ENCODE measurements at regions of chr5 and their contacts with region 1.

Region 1: GRCh38 chr5:157328277-157328912 is 62.5 kb downstream of the CYFIP2 start:
- DNase-seq: peak in 1 of 2 donors; percentile 69
- ATAC-seq: peak; percentile 95
- H3K4me3 ChIP-seq: no peak overlapping the region
- H3K27ac ChIP-seq: no peak overlapping the region
- H3K4me1 ChIP-seq: no peaks in the 10 kb centered on the region
- H3K27me3 ChIP-seq: no peaks in the 10 kb centered on the region

Region 2: DNA sequence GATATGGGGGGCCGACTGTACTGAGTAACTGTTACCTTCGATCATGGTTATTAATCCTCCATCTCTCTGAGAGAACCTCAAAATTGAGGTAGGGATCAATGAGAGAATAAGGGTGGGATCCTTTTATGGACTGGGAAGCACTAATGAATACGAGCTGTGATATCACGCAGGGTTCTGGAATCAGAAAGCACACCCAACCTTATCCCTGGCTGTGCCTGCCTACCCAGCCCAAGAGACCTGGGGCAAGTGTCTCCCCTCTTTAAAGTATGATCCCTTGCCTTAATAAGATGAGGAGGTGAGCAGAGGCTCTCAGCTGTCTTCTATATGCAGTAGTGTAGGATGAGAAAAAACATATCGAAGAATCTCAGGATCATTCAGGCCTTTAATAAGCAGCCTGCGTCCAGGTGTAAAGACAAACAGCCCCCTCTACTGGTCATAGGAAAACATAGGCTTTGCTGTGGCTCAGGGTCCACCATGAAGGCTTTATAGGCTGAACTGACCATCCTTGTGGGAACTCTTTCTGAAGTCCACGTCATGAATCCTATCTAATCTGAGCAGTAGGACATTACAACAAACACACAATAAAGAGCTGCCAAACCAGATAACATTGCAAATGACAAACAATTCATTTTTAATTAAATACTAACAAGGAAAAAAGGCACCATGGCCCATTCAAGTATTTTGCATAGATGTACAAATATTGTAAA is 148.5 kb after region 1 on chr5:
- intact Hi-C with region 1: loop called (anchors 2 to 5 kb)
- DNase-seq: peak in 1 of 2 donors; percentile 4
- ATAC-seq: peak; percentile 69
- H3K4me3 ChIP-seq: no peak overlapping the region
- H3K27ac ChIP-seq: no peak overlapping the region
- H3K4me1 ChIP-seq: no peaks in the 10 kb centered on the region
- H3K27me3 ChIP-seq: no peaks in the 10 kb centered on the region

Region 3: DNA sequence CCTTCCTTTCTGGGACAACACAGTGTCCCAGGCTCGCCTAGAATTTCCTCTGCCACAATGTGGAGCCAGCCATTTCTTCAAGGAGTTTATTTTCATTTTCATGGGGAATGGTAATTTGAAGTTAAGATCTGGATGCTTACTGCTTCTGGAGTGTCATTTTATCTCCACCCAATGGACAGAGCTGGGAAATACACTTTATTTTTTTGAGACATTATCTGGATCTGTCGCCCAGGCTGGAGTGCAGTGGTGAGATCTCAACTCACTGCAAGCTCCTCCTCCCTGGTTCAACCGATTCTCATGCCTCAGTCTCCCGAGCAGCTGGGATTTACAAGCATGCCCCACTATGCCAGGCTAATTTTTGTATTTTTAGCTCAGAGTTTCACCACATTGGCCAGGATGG is 390.1 kb after region 1 on chr5:
- intact Hi-C with region 1: loop called in 1 of 2 experiments (anchors 10 kb)
- DNase-seq: no peak
- ATAC-seq: peak; percentile 89
- H3K4me3 ChIP-seq: no peak overlapping the region
- H3K27ac ChIP-seq: no peak overlapping the region
- H3K4me1 ChIP-seq: no peaks in the 10 kb centered on the region
- H3K27me3 ChIP-seq: no peaks in the 10 kb centered on the region

Measured in aorta (tissue), 5 donors.